ENCODE measurements at regions of chr2 and their contacts with region 1.

Region 1: DNA sequence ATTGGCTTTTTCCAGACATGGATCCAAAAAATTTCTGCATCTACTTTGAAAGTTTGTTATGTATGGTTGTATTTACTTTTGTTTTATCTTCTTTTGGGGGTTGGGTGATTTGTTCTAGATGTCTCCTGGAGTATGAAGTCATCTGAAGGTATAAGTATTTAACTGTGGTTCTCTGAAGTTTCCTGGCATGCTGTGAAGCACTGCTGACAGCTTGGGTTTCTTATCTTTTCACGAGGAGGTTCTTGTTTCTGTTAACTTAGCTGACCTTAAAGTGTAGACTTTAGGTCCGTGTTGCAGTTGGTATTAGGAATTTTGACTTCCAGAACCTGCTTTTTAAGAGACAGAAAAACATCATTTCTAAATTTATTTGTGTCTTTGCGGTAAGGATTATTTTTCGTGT is 15.9 kb downstream of the GLS start:
- DNase-seq: no peak
- ATAC-seq: no peak
- H3K4me3 ChIP-seq: no peak overlapping the region
- H3K27ac ChIP-seq: no peak overlapping the region
- H3K4me1 ChIP-seq: no peaks in the 10 kb centered on the region
- H3K27me3 ChIP-seq: no peaks in the 10 kb centered on the region
- CTCF ChIP-seq: no peak
- POLR2A ChIP-seq: no peak
- RAD21 ChIP-seq: no peak

Region 2: GRCh38 chr2:190996338-190996946 is 100.0 kb after region 1 on chr2:
- CTCF ChIA-PET with region 1: no interaction called
- POLR2A ChIA-PET with region 1: no interaction called
- RAD21 ChIA-PET with region 1: no interaction called
- intact Hi-C with region 1: loop called (anchors 2 kb)
- DNase-seq: no peak
- ATAC-seq: peak; percentile 99
- H3K4me3 ChIP-seq: no peak overlapping the region
- H3K27ac ChIP-seq: no peak overlapping the region
- H3K4me1 ChIP-seq: no peaks in the 10 kb centered on the region
- H3K27me3 ChIP-seq: no peaks in the 10 kb centered on the region
- CTCF ChIP-seq: peak; percentile 80 to 91 (median 80)
- POLR2A ChIP-seq: no peak
- RAD21 ChIP-seq: peak; percentile 53

Measured in HCT116 (cell line).